PC-3 (cell line): ENCODE measurements at regions of chr14 and their contacts with region 1.

Region 1: GRCh38 chr14:88868558-88869159 is 44.2 kb downstream of the TTC8 start:
- DNase-seq: peak; percentile 56
- ATAC-seq: peak; percentile 83
- H3K4me3 ChIP-seq: no peak overlapping the region
- H3K27ac ChIP-seq: no peak overlapping the region
- H3K4me1 ChIP-seq: no peaks in the 10 kb centered on the region
- H3K27me3 ChIP-seq: no peaks in the 10 kb centered on the region
- CTCF ChIP-seq: peak; percentile 67

Region 2: GRCh38 chr14:88746052-88746451 is 122.6 kb before region 1 on chr14:
- CTCF ChIA-PET with region 1: no interaction called
- POLR2A ChIA-PET with region 1: no interaction called
- intact Hi-C with region 1: loop called (anchors 10 kb)
- DNase-seq: peak; percentile 28
- ATAC-seq: no peak
- H3K4me3 ChIP-seq: no peak overlapping the region
- H3K27ac ChIP-seq: no peak overlapping the region
- H3K4me1 ChIP-seq: peaks cover 25% of the 10 kb centered on the region
- H3K27me3 ChIP-seq: no peaks in the 10 kb centered on the region
- CTCF ChIP-seq: no peak

Region 3: DNA sequence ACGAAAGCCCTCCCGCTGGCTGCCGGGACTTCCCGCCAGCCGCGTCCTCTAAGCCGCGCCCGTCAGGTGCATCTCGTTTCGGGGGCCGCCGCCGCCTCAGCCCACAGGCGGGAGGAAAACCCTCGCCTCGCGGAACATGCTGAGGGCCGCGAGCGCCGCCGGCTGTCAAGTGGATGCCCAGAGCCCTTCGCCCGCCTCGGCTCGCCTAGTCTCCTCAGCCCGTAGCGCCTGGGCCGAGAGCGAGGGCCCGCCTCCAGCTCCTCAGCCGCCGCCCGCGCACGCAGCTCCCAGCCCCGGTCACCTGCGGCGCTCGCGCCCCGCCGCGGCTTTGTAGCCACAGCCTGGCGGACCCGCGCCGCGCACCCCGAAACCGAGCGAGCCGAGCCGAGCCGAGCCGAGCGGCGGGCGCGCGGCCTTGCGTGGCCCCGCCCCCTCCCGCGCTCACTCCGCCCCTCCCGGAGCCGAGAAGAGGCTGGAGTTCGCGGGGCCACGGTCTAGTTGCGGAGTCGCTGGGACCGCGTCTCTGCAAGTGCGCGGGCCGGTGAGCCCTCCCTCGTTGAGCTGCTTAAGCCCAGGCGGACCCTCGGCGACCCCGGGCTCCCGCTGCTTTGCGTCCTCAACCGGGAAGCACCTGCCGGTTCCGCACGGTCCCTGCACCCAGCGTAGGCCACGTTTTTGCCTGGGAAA is 75.9 kb before region 1 on chr14 and contains the start of gene EML5:
- CTCF ChIA-PET with region 1: no interaction called
- POLR2A ChIA-PET with region 1: no interaction called
- intact Hi-C with region 1: loop called (anchors 5 kb)
- DNase-seq: peak; percentile 81
- ATAC-seq: peak; percentile 86
- H3K4me3 ChIP-seq: peak within 1 kb of the TSS; percentile 86
- H3K27ac ChIP-seq: no peak within 1 kb of the TSS
- H3K4me1 ChIP-seq: peaks cover 8% of the 10 kb centered on the region; the same call in 1 of the 2 replicates
- H3K27me3 ChIP-seq: 0 out of 2 replicates have a peak, but pooled peaks cover 4% of the 10 kb centered on the region
- CTCF ChIP-seq: no peak
- total RNA-seq, gene EML5: 0.66 and 0.86 TPM in 2 replicates

Region 4: DNA sequence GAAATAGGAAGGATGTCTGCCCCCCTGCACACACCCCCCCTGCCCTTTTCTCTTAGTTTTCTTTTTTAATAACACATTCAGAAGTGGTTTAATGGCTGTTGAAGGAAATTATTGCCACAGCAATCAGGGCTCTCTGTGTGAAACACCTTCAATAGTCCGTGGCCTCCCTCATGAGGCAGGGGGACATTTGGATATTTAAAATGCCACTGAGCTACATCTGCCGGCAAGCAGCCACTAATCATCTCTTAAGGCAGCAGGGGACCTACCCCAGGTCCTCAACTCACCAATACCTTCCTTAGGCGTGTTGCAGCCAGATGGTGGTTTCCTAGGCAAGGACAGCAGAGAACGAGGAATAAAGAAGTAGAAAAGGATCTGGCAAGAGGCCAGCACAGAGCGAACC is 239.0 kb after region 1 on chr14:
- CTCF ChIA-PET with region 1: no interaction called
- POLR2A ChIA-PET with region 1: no interaction called
- intact Hi-C with region 1: no loop called
- DNase-seq: no peak
- ATAC-seq: no peak
- H3K4me3 ChIP-seq: no peak overlapping the region
- H3K27ac ChIP-seq: no peak overlapping the region
- H3K4me1 ChIP-seq: no peaks in the 10 kb centered on the region
- H3K27me3 ChIP-seq: no peaks in the 10 kb centered on the region; the same call in 1 of the 2 replicates
- CTCF ChIP-seq: no peak

Region 5: DNA sequence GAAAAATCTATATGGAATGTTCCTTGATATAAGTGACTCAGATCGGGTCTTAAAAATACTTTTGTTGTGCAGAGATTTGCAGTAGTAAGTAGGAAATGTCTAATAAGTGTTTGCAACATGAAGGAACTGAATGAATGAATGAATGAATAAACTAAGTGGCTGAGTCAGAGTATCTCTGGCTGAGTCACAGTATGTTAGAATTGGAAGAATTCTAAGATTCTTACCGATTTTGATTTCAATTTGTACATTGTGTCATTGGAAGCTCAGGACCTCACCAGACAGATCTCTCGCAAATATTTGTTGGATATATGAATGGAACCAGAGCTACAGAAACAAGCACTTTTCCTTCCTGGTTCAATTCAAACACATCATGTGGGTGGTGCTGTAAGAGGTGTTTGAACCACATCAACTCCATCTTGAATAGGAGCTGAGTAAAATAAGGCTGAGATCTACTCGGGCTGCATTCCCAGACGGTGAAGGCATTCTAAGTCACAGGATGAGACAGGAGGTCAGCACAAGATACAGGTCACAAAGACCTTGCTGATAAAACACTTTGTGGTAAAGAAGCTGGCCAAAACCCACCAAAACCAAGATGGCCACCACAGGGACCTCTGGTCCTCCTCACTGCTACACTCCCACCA is 672.3 kb after region 1 on chr14:
- CTCF ChIA-PET with region 1: no interaction called
- POLR2A ChIA-PET with region 1: no interaction called
- intact Hi-C with region 1: no loop called
- DNase-seq: peak; percentile 72
- ATAC-seq: peak; percentile 48
- H3K4me3 ChIP-seq: no peak overlapping the region
- H3K27ac ChIP-seq: peak overlapping the region; percentile 58
- H3K4me1 ChIP-seq: peaks cover 21% of the 10 kb centered on the region
- H3K27me3 ChIP-seq: no peaks in the 10 kb centered on the region
- CTCF ChIP-seq: no peak